ENCODE measurements at regions of chr20 and their contacts with region 1.

Region 1: DNA sequence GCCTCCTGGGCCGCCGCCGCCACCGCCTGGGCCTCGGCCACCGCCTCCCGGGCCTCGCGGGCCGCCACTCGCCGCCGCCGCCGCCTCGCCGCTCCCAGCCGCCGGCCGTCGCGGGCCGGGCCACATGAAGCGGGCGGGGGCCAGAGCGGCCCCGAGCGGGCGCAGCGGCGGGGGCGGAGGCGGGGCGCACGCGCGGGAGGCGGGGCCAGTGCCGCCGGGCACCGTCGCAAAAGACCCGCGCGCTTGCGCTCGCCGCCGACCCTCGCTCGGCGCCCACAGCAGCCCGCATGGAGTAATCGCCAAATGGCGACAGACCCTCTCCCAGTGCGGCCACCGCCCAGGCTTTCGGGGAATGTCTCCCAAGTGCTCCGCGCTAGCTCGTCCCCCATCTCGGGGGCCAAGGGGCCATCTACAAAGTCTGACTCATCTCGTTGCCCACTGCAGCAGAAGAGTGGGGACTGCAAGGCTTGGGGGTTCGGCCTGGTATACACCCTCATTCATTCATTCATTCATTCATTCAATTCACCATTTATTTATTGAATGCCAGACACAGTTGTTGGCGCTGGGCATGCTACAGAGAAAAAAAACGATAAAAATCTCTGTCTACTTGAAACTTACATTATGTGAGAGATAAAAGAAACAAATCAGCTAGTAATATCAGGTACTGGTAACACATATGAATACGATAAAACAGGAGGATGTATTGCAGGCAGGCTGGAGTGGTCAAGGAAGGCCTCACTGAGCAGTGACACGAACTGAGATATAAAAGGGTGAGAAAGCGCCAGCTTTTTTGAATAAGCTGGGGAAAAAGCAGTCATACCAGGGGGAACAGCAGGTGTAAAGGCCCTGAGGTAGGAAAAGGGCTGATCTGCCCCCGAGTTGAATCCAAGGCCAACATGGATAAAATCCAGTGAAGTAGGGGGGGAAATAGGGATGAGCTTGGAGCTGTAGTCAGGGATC is at the start of gene B4GALT5:
- DNase-seq: peak; percentile 58
- H3K4me3 Mint-ChIP-seq: peak within 1 kb of the TSS; percentile 82
- H3K27ac Mint-ChIP-seq: peak within 1 kb of the TSS; percentile 60
- H3K4me1 Mint-ChIP-seq: peaks cover 40% of the 10 kb centered on the region
- H3K27me3 Mint-ChIP-seq: peaks cover 3% of the 10 kb centered on the region
- total RNA-seq, gene B4GALT5: 21.6 to 22.4 TPM

Region 2: DNA sequence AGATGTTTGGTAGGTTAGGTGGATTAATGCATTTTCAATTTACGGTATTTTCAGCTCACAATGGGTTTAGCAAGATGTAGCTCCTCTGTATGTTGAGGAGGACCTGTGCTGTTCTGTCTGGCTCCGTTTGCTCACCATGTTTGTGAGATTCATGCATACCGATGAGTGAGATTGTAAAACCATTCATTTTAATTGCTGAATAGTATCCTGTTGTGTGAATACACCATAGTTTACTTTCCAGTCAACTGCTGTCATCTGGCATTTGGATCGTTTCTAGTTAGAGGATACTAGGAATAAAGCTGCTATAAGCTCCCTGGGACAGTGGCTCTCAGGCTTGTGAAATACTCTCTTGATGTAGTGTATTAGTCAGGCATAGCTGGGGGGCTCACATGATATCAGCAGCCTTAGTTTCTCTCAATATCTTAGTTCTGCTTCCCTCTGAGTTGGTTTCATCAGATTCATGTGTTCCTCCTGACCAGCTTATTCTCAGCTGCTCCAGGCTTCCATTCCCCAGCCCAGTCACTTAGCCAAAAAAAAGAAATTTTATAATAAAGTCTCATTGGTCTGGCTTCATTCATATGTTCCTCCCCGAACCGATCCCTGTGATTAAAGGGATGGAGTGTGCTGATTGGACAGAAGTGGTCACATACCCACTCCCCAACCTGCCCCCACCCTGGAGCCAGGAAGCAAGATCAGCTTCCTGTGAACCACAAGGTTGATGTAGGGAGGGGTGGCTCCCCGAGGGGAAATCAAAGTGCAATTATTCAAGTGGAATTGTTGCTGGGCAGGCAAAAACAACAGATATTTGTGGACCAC is 10.6 kb after region 1 on chr20:
- CTCF ChIA-PET with region 1: interaction called, 4 read pairs
- POLR2A ChIA-PET with region 1: interaction called, 10 read pairs
- DNase-seq: no peak
- H3K4me3 Mint-ChIP-seq: no peak overlapping the region
- H3K27ac Mint-ChIP-seq: no peak overlapping the region
- H3K4me1 Mint-ChIP-seq: peaks cover 16% of the 10 kb centered on the region
- H3K27me3 Mint-ChIP-seq: peaks cover 2% of the 10 kb centered on the region

Measured in activated CD4-positive, alpha-beta memory T cell treated with anti-CD3 and anti-CD28 coated beads, Interleukin-2, amount 10 ng/mL, durations not matched to agents 7 days and 5 days (primary cell).